ENCODE measurements at regions of chr14 and their contacts with region 1.

Region 1: GRCh38 chr14:77910512-77910911 is 110.6 kb downstream of the ADCK1 start:
- DNase-seq: no peak
- ATAC-seq: no peak
- H3K4me3 ChIP-seq: no peak overlapping the region
- H3K27ac ChIP-seq: no peak overlapping the region
- H3K4me1 ChIP-seq: no peaks in the 10 kb centered on the region
- H3K27me3 ChIP-seq: no peaks in the 10 kb centered on the region
- CTCF ChIP-seq: no peak
- POLR2A ChIP-seq: no peak

Region 2: DNA sequence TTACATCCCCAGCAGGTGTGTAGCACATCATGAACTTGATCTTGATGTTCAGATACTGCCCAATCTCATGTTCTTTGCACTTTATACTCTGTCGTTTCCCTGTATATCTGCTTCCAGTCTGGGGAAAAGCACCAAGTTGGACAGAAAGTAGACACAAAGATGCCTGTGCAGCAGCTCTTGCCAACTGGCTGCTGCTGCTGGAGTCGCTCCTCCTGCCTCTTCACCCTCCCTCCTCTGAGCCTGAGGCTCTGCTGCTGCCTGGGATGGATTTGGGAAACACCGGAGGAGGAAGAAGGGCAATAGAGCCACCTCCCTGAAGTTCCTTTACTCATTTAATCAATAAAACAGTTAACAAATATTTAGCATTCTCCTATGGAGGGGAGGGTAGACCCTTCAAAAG is 78.2 kb before region 1 on chr14:
- intact Hi-C with region 1: loop called in 1 of 10 experiments (anchors 2 kb)
- DNase-seq: no peak
- ATAC-seq: peak in 3 of 4 donors; percentile 36 to 62 (median 57)
- H3K4me3 ChIP-seq: no peak overlapping the region
- H3K27ac ChIP-seq: no peak overlapping the region
- H3K4me1 ChIP-seq: no peaks in the 10 kb centered on the region
- H3K27me3 ChIP-seq: no peaks in the 10 kb centered on the region
- CTCF ChIP-seq: no peak
- POLR2A ChIP-seq: no peak

Region 3: GRCh38 chr14:77931441-77931840 is 20.9 kb after region 1 on chr14:
- intact Hi-C with region 1: no loop called
- DNase-seq: no peak
- ATAC-seq: no peak
- H3K4me3 ChIP-seq: no peak overlapping the region
- H3K27ac ChIP-seq: no peak overlapping the region
- H3K4me1 ChIP-seq: no peaks in the 10 kb centered on the region
- H3K27me3 ChIP-seq: no peaks in the 10 kb centered on the region
- CTCF ChIP-seq: no peak
- POLR2A ChIP-seq: no peak

Measured in heart left ventricle (tissue), 16 donors.